K562 (cell line): ENCODE measurements at regions of chr6 and their contacts with region 1.

Region 1: GRCh38 chr6:42136508-42137193 is 5.8 kb downstream of the C6orf132 start:
- DNase-seq: peak; percentile 88 to 91 (median 88)
- ATAC-seq: peak; percentile 83
- H3K4me3 ChIP-seq: 0 out of 2 replicates have a peak overlapping the region, but pooled peaks have one; percentile 1
- H3K27ac ChIP-seq: peak overlapping the region; percentile 70
- H3K4me1 ChIP-seq: peaks cover 34 to 46% of the 10 kb centered on the region in 2 experiments
- H3K27me3 ChIP-seq: no peaks in the 10 kb centered on the region
- CTCF ChIP-seq: peak; percentile 70 to 78 (median 74)
- EP300 ChIP-seq: peak; percentile 70
- POLR2A ChIP-seq: no peak
- RAD21 ChIP-seq: peak; percentile 17 to 65; a peak in 2 of 4 replicates

Region 2: GRCh38 chr6:42152024-42152423 is 15.4 kb after region 1 on chr6:
- CTCF ChIA-PET with region 1: no interaction called
- POLR2A ChIA-PET with region 1: interaction called, 18 read pairs
- in situ Hi-C with region 1: no loop called
- intact Hi-C with region 1: no loop called
- DNase-seq: no peak
- ATAC-seq: no peak
- H3K4me3 ChIP-seq: no peak overlapping the region
- H3K27ac ChIP-seq: no peak overlapping the region
- H3K4me1 ChIP-seq: peaks cover 9 to 11% of the 10 kb centered on the region in 2 experiments; a peak in 4 of 5 replicates
- H3K27me3 ChIP-seq: peaks cover 9 to 31% of the 10 kb centered on the region in 2 experiments; a peak in 4 of 5 replicates
- CTCF ChIP-seq: no peak
- EP300 ChIP-seq: no peak
- POLR2A ChIP-seq: no peak
- RAD21 ChIP-seq: no peak

Region 3: DNA sequence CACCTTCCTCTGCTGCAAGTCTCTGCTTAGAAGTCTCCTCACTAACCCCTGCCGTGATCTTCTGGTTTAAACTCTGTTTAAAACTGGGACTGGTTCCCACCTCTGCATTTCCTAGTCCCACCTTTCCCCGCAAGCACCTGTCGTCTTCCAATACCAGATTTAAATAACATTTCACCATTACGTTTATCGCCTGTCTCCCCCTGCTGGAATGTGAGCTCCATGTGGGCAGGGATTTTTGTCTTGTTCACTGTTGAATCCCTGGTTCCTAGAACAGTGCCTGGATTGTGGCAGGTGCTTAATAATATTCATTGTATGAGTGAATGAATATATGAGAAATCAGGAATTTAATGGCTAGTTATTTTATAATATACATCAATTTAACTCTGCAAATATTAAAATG is 39.2 kb after region 1 on chr6:
- CTCF ChIA-PET with region 1: no interaction called
- POLR2A ChIA-PET with region 1: no interaction called
- in situ Hi-C with region 1: no loop called
- intact Hi-C with region 1: no loop called
- DNase-seq: no peak
- ATAC-seq: no peak
- H3K4me3 ChIP-seq: no peak overlapping the region
- H3K27ac ChIP-seq: no peak overlapping the region
- H3K4me1 ChIP-seq: peaks cover 0 to 20% of the 10 kb centered on the region in 2 experiments; a peak in 3 of 5 replicates
- H3K27me3 ChIP-seq: no peaks in the 10 kb centered on the region
- CTCF ChIP-seq: peak; percentile 43 to 50 (median 48)
- EP300 ChIP-seq: no peak
- POLR2A ChIP-seq: no peak
- RAD21 ChIP-seq: peak in 1 of 2 experiments; percentile 18; a peak in 1 of 4 replicates

Region 4: GRCh38 chr6:42230345-42231321 is 94.0 kb after region 1 on chr6:
- CTCF ChIA-PET with region 1: no interaction called
- POLR2A ChIA-PET with region 1: no interaction called
- in situ Hi-C with region 1: no loop called
- intact Hi-C with region 1: loop called (anchors 1 kb)
- DNase-seq: peak in 3 of 4 experiments; percentile 40 to 68 (median 58)
- ATAC-seq: peak; percentile 69
- H3K4me3 ChIP-seq: no peak overlapping the region
- H3K27ac ChIP-seq: no peak overlapping the region
- H3K4me1 ChIP-seq: peaks cover 14 to 21% of the 10 kb centered on the region in 2 experiments
- H3K27me3 ChIP-seq: no peaks in the 10 kb centered on the region
- CTCF ChIP-seq: peak; percentile 62 to 83 (median 80)
- EP300 ChIP-seq: no peak
- POLR2A ChIP-seq: no peak
- RAD21 ChIP-seq: peak; percentile 66 to 82